Mucosa of descending colon (tissue), 3 donors: ENCODE measurements at regions of chr1 and their contacts with region 1.

Region 1: GRCh38 chr1:203480525-203481084 is 5.0 kb downstream of the PRELP start:
- DNase-seq: peak; percentile 85 to 90 (median 87)
- ATAC-seq: peak; percentile 96
- H3K4me3 ChIP-seq: no peak overlapping the region
- H3K4me1 ChIP-seq: peaks cover 7% of the 10 kb centered on the region
- CTCF ChIP-seq: no peak

Region 2: DNA sequence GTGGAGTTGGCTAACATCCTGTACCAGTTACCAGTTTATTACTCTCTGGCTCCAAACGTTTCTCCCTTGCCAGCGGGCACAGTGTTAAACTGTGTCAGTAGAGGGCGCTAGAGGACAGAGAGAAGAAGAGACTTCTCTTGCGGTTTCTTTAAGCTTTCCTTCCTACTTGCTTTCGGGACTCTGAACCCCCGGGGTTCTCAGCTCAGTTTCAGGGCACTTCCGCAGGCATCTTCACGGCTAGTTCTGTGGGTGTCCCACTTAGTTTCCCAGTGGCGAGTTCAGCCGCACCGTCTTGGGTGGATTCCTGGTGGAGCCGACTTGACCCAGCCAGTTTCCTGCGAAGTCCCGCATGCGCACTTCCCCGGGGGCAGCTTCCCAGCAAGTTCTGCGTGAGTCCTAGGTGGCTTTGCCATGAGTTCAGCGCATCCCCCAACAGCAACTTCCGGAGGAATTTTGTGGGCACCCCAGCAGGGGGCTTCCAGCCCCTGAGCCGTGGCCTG is 213.2 kb before region 1 on chr1:
- intact Hi-C with region 1: loop called (anchors 10 kb)
- DNase-seq: peak; percentile 84 to 93 (median 85)
- ATAC-seq: peak; percentile 90
- H3K4me3 ChIP-seq: no peak overlapping the region
- H3K4me1 ChIP-seq: no peaks in the 10 kb centered on the region
- CTCF ChIP-seq: peak; percentile 81

Region 3: GRCh38 chr1:203673550-203674427 is 193.2 kb after region 1 on chr1:
- intact Hi-C with region 1: no loop called
- DNase-seq: peak; percentile 52 to 73 (median 56)
- ATAC-seq: peak; percentile 73
- H3K4me3 ChIP-seq: no peak overlapping the region
- H3K4me1 ChIP-seq: peaks cover 18% of the 10 kb centered on the region
- CTCF ChIP-seq: no peak

Region 4: GRCh38 chr1:203789956-203790355 is 309.4 kb after region 1 on chr1:
- intact Hi-C with region 1: no loop called
- DNase-seq: no peak
- ATAC-seq: no peak
- H3K4me3 ChIP-seq: no peak overlapping the region
- H3K4me1 ChIP-seq: peaks cover 3% of the 10 kb centered on the region
- CTCF ChIP-seq: no peak